AG04449 (cell line): ENCODE measurements at regions of chr11 and their contacts with region 1.

Region 1: DNA sequence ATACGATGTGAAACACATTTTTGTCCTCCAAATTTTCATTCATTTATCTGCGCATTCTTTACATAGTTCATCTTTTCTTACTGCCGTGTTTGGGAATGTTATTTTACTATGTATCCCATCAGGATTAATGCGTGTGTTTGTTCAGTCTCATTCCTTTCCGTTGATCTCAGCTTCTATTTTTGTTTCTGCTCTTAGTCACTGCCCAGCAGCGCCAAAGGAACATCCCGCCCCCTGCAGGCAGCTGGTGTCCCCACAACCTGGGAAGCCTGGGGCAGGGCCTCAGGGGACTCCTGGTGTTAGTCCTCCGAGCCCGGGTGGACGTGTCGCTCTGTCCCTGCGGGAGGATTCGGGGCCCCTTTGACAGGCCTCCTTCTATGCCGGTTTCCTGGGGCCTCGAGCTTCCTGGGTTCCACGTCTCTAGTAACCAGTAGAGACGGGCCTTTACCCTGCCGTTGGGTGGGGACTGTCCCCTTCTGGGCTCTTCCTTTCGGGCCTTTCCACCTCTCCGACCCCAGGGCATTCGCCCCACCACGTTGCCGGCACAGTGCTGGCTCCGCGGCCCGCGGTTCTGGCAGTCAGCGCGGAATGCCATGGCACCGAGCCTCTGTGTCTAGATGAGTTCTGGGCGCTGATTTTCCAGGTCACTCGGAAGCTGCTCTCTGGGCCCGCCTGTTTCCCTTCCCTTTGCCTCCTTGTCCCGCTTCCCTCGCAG is 39.8 kb downstream of the WEE1 start:
- DNase-seq: peak; percentile 95
- H3K4me3 ChIP-seq: peak overlapping the region; percentile 45
- CTCF ChIP-seq: peak; percentile 97

Region 2: GRCh38 chr11:9573052-9573774 is 40.1 kb before region 1 on chr11 and contains the start of gene WEE1:
- CTCF ChIA-PET with region 1: interaction called, 13 read pairs
- POLR2A ChIA-PET with region 1: interaction called, 9 read pairs
- DNase-seq: peak; percentile 79
- H3K4me3 ChIP-seq: peak within 1 kb of the TSS; percentile 81
- CTCF ChIP-seq: no peak

Region 3: DNA sequence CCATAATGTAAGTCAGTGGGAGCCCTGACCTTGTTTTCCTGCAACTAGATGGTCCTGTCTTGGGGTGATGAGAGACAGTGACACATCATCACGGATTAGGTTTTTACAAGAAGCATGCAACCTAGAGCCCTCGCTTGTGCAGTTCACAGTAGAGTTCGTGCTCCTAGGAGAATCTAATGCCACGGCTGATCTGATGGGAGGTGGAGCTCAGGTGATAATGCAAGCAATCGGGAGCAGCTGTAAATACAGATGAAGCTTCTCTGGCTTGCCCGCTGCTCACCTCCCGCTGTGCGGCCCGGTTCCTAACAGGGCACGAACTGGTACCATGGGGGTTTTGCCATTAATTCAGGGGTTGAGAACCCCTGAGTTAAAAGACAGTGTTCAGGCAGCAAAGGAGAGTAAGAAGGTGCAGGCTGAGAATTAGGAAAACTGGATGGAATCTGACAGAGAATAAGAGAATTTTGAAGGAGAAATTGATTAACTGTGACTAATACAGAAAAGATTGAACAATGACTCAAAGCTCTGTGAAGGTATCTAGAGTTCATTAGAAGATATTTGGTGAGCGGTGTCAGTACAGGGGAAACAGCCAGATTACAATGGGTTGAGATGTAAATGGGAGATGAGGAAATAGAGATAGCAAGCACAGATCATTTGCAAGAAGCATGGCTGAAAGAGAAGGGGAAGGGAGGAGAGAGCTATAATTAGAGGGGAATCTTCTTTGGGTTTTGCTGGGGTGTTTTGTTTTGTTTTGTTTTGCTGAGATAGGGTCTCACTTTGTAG is 18.8 kb before region 1 on chr11:
- CTCF ChIA-PET with region 1: interaction called, 16 read pairs
- POLR2A ChIA-PET with region 1: no interaction called
- DNase-seq: no peak
- H3K4me3 ChIP-seq: no peak overlapping the region
- CTCF ChIP-seq: no peak

Region 4: DNA sequence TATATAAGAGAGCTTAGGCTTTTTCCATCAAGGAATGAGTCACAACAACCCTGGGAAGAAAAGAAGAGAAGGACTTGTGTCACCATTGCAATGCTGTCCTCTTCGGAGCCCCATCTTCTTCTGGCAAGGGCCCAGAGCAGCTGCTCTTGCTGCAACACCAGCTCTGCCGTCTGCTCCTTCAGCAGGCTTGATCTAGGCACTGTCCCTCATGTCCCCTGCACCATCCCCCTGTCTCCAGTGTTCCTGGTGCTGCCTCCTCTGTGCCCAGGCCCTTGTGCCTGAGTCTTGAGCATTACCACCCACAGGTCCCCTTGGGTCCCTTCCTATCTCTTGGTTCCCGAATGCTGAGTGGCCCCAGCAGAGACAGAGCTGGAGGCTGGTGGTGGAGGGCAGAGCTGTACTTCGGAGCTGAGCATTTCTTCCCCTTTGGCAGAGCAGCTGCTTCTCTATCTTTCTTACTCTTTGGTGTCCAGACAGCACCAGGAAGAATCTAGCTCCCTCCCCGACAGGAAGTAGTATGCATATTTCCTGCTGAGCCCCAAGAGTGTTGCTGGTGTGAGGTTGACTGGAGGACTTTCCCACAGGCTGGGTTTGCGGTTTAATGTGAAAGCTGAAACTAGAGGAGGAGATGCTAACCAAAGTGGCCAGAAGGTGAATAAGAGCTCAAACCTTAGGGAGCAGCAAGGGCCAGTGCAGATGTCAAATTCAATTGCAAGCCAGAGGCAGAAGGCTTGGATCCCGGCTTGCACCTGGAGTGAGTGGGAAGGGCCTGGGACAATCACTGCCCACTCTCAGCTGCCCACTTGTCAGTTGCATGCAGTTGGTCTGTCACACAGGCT is 12.0 kb before region 1 on chr11:
- CTCF ChIA-PET with region 1: interaction called, 35 read pairs
- POLR2A ChIA-PET with region 1: no interaction called
- DNase-seq: no peak
- H3K4me3 ChIP-seq: no peak overlapping the region
- CTCF ChIP-seq: no peak

Region 5: GRCh38 chr11:9626496-9627394 is 13.5 kb after region 1 on chr11:
- CTCF ChIA-PET with region 1: interaction called, 18 read pairs
- POLR2A ChIA-PET with region 1: no interaction called
- DNase-seq: no peak
- H3K4me3 ChIP-seq: no peak overlapping the region
- CTCF ChIP-seq: no peak

Region 6: GRCh38 chr11:9748361-9748970 is 135.2 kb after region 1 on chr11:
- CTCF ChIA-PET with region 1: interaction called, 49 read pairs
- POLR2A ChIA-PET with region 1: no interaction called
- DNase-seq: no peak
- H3K4me3 ChIP-seq: no peak overlapping the region
- CTCF ChIP-seq: peak; percentile 54